ENCODE measurements at regions of chr16 and their contacts with region 1.

Region 1: DNA sequence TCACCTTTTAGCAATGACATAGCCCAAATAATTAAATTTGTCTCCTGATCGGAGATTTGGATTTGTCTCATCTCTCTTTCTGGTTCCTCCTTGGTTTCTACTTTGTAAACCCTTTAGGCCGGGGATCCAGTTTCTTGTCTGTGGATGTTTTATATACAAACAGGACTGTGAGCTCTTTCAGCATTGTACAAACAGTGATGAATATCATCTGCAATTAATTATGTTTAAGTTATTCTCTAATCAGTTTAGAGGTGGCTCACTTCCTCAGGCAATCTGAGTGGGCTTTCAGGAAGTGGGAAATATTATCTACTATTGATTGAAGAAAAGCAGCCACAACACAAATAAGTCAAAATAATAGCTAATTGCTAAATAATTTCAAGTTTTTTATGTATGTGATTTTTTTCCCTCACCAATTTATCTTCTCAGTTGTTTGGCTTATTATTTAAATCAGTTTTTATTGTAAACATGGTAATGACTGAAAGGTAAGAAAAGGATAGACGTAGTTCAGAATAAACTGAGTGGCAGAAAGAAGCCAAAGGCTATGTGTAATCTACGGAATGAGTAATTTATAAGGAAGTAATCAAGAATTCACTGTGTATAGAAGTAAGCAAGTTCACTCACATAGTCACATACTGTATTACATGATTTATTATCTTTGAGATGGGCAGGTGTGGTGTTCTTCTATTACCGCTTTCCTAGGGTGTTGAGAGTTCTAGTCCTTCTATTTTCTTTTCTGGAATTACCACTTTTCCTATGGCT is 3.4 kb upstream of the ABCC11 start:
- DNase-seq: no peak
- ATAC-seq: peak in 1 of 4 donors; percentile 41
- H3K4me3 ChIP-seq: no peak overlapping the region
- H3K27ac ChIP-seq: peak overlapping the region in 1 of 3 donors; percentile 59
- H3K4me1 ChIP-seq: peaks cover 0 to 40% (median 21%) of the 10 kb centered on the region in 4 donors
- H3K27me3 ChIP-seq: no peaks in the 10 kb centered on the region
- CTCF ChIP-seq: no peak
- POLR2A ChIP-seq: no peak

Region 2: DNA sequence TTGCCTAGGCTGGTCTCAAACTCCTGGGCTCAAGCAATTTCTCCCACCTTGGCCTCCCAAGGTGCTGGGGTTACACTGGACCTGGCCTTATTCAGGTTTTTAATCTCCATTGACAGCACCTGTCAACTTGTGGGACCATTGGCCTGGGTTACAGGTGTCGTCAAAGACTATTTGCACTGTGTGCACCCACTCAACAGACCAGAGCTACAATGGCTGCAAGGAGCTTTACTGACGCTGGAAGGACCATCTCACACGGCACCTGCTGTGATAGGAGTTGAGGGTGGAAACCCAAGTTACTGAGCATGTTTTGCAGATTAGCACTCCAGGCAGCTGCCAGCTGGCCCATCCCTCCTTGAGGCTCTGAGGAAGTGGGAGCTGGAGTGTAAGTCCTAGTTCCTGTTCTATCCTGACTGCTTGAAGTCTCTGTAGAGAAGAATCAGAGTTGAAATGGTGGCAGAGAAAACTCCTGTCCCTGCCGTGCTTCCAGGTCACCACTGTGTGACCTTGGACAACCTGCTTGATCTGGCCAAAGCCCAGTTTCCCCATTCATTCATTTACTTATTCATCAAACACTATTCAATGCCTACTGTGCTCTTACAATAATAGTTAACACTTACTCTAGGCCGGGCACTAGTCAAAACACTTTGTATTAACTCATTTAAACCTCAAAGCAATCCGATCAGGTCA is 49.0 kb before region 1 on chr16:
- intact Hi-C with region 1: no loop called
- DNase-seq: no peak
- ATAC-seq: peak; percentile 1 to 11 (median 6)
- H3K4me3 ChIP-seq: no peak overlapping the region
- H3K27ac ChIP-seq: peak overlapping the region in 1 of 3 donors; percentile 19
- H3K4me1 ChIP-seq: peaks cover 0 to 50% (median 22%) of the 10 kb centered on the region in 4 donors
- H3K27me3 ChIP-seq: no peaks in the 10 kb centered on the region
- CTCF ChIP-seq: no peak
- POLR2A ChIP-seq: no peak

Region 3: DNA sequence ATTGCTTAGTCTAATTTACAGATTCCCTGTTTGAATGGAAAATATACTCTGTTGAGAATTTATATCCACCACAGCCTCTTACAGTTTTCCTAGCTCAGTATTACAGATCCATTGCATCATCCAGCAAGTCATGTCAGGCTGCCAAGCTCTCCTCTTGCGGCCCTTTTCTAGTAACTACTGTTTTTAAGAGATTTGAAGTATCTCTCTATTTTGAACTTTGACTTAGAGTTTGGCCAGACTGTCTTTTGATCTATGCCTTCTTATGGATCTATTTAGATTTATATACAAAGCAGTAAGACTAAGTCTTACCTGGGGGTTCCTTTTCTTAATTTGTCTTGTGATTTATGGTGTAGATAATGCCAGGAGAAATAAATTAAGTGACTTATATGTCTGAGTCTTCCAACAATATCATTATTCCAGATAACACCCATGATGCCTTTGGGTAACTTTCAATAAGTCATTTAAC is 49.7 kb after region 1 on chr16:
- intact Hi-C with region 1: loop called in 1 of 2 experiments (anchors 10 kb)
- DNase-seq: no peak
- ATAC-seq: peak; percentile 62 to 82 (median 77)
- H3K4me3 ChIP-seq: no peak overlapping the region
- H3K27ac ChIP-seq: peak overlapping the region in 1 of 3 donors; percentile 26
- H3K4me1 ChIP-seq: peaks cover 0 to 33% (median 9%) of the 10 kb centered on the region in 4 donors
- H3K27me3 ChIP-seq: no peaks in the 10 kb centered on the region
- CTCF ChIP-seq: no peak
- POLR2A ChIP-seq: no peak

Region 4: DNA sequence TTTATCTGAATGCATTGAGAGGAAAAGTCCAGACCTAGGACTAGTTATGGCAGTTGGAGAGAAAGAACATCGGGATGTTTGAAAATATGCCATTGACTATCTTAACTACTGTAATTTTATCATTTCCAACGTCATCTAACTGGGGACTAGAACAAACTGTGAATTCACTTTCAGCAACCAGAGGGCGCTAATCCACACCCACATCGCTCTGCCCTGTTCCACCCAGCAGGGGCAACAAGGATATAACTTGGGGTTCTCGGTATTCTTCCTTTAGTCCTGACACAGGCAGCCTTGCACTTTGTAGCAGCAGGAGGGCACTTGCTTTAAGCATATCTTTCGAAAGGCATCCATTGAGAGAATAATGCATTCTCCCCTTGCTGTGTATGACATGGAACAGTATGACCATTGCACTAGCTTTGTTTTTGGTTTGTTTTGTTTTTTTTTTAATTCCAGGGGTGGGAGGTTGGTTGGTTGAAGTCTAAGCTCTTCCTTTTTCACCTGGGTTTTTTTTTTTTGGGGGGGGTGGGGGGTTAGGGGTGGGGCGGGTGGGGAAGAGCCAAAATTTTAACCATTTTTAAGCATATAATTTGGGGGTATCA is 103.0 kb after region 1 on chr16:
- intact Hi-C with region 1: no loop called
- DNase-seq: no peak
- ATAC-seq: peak; percentile 80 to 89 (median 84)
- H3K4me3 ChIP-seq: no peak overlapping the region
- H3K27ac ChIP-seq: no peak overlapping the region
- H3K4me1 ChIP-seq: no peaks in the 10 kb centered on the region
- H3K27me3 ChIP-seq: no peaks in the 10 kb centered on the region
- CTCF ChIP-seq: peak; percentile 76 to 90 (median 88)
- POLR2A ChIP-seq: no peak

Measured in right lobe of liver (tissue), 6 donors.